ENCODE measurements at regions of chr19 and their contacts with region 1.

Region 1: GRCh38 chr19:9008667-9009066 is 1.5 kb downstream of the MUC16 start:
- DNase-seq: no peak
- ATAC-seq: no peak
- H3K4me3 ChIP-seq: no peak overlapping the region
- H3K27ac ChIP-seq: peak overlapping the region; percentile 29; the same call in 1 of the 2 replicates
- H3K4me1 ChIP-seq: peaks cover 8% of the 10 kb centered on the region
- H3K27me3 ChIP-seq: no peaks in the 10 kb centered on the region
- CTCF ChIP-seq: no peak

Region 2: DNA sequence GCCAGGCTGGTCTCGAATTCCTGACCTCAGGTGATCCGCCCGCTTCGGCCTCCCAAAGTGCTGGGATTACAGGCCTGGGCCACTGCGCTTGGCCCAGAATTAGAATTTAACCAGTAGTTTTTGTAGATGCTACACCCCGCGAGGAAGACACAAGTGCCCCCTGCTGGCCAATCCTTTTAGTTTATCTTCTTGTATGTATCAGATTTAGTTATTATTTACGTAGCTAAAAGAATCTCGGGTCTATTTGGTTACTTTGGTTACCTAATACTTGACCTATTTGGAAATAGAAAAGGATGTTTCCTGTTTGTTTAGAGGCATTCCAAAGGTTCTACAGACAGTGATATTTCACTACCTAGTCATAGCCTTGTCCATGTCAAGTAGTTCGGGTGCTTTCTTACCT is 20.5 kb before region 1 on chr19:
- CTCF ChIA-PET with region 1: no interaction called
- POLR2A ChIA-PET with region 1: interaction called, 17 read pairs
- in situ Hi-C with region 1: no loop called
- intact Hi-C with region 1: no loop called
- DNase-seq: no peak
- ATAC-seq: no peak
- H3K4me3 ChIP-seq: no peak overlapping the region
- H3K27ac ChIP-seq: no peak overlapping the region
- H3K4me1 ChIP-seq: no peaks in the 10 kb centered on the region
- H3K27me3 ChIP-seq: no peaks in the 10 kb centered on the region
- CTCF ChIP-seq: peak; percentile 47

Region 3: DNA sequence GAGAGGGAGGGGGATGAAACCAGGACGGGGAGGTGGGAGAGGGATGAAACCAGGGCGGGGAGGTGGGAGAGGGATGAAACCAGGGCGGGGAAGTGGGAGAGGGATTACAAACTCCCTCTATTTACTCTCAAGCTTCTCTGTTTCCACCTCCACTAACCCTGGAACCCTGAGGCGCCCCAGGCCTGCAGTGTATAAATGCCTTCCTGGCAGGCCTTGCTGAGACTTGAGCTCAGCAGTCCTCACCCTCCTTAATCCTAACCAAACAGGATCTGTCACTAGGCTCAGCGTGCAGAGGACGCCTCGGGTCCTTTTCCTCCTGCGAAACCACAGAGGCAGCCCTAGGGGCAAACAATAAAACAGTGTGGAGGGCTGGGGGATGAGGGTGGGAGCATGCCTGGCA is 46.1 kb after region 1 on chr19:
- CTCF ChIA-PET with region 1: no interaction called
- POLR2A ChIA-PET with region 1: interaction called, 10 read pairs
- in situ Hi-C with region 1: no loop called
- intact Hi-C with region 1: no loop called
- DNase-seq: no peak
- ATAC-seq: peak; percentile 95
- H3K4me3 ChIP-seq: no peak overlapping the region; a peak in 1 of 4 replicates
- H3K27ac ChIP-seq: peak overlapping the region; percentile 84
- H3K4me1 ChIP-seq: peaks cover 19% of the 10 kb centered on the region
- H3K27me3 ChIP-seq: no peaks in the 10 kb centered on the region
- CTCF ChIP-seq: no peak